Panc1 (cell line): ENCODE measurements at regions of chr11 and their contacts with region 1.

Region 1: DNA sequence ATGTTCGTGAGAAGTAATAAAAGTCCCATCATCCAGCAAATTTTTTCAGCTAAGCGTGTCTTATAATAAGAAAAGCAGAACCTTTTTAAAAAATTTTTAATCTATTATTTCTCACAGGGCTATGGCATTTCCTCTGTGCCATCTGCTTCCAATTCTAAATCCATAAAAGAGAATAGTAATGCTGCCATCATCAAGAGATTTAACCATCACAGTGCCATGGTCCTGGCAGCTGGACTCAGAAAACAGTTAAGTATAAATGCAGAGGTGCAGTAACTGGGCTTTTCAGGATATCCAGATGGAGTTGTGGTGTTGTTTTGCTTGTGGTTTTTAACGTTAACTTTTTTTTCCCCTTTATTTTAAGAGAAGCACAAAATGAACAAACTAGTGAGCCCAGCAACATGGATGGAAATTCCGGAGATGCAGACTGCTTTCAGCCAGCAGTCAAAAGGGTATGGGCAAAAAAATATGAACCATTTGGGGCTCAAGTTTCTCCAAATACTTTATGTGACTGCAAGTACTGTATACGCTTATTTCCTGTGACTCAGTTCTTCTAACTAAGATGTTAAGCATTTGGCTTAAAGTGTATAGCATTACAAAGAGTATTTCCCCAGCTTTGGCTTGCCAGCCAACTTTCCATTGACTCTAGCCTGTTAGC is 25.2 kb downstream of the GTF2H1 start:
- DNase-seq: no peak
- ATAC-seq: no peak
- H3K4me3 ChIP-seq: no peak overlapping the region
- H3K27ac ChIP-seq: no peak overlapping the region
- H3K4me1 ChIP-seq: no peaks in the 10 kb centered on the region
- H3K27me3 ChIP-seq: no peaks in the 10 kb centered on the region
- CTCF ChIP-seq: no peak

Region 2: DNA sequence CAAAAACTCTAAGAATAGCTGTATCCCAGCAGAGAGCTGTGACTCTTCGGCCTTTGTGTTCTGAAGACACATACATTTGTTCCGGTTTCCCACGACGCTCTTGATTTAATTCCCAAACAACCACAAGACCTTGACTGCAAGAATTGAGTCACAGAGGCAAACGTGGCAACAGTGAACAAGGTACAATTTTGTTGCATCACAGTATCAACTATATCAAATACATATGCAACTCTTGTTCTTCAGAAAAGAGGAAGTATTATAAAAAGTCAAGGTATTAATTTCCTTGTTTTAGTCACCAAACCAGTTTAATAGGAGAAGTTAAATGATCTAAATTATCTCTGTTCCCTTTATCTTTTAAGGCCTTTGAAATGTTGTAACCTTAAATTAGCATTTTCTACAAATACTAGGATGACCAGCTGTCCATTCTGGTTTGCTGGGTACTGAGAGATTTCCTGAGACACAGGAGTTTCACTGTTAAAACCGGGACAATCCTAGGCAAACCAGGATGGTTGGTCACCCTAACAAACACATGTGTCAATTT is 36.7 kb before region 1 on chr11:
- CTCF ChIA-PET with region 1: no interaction called
- POLR2A ChIA-PET with region 1: interaction called, 12 read pairs
- in situ Hi-C with region 1: no loop called
- intact Hi-C with region 1: no loop called
- DNase-seq: no peak
- ATAC-seq: no peak
- H3K4me3 ChIP-seq: no peak overlapping the region
- H3K27ac ChIP-seq: no peak overlapping the region
- H3K4me1 ChIP-seq: no peaks in the 10 kb centered on the region; the same call in 1 of the 2 replicates
- H3K27me3 ChIP-seq: no peaks in the 10 kb centered on the region
- CTCF ChIP-seq: no peak

Region 3: DNA sequence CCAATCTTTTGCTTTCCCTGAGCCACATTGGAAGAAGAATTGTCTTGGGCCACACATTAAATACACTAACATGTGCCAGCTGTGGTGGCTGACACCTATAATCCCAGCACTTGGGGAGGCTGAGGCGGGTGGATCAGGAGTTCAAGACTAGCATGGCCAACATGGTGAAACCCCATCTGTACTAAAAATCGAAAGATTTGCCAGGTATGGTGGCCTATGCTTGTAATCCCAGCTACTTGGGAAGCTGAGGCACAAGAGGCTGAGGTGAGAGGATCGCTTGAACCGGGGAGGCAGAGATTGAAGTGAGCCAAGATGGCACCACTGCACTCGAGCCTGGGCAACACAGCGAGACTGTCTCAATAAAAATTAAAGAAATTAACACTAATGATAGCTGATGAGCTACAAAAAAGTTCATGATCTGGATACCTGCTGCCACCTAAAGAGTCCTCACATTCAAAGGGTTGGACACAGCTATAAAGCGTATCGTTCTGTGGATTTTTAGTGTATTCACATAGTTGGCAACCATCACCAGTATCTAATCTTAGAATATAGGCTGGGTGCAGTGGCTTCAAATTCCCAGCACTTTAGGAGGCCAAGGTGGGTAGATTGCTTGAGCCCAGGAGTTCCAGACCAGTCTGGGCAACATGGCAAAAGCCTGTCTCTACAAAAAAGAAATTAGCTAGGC is 61.1 kb after region 1 on chr11:
- CTCF ChIA-PET with region 1: interaction called, 10 read pairs
- POLR2A ChIA-PET with region 1: no interaction called
- in situ Hi-C with region 1: no loop called
- intact Hi-C with region 1: no loop called
- DNase-seq: no peak
- ATAC-seq: peak; percentile 43
- H3K4me3 ChIP-seq: no peak overlapping the region
- H3K27ac ChIP-seq: no peak overlapping the region
- H3K4me1 ChIP-seq: peaks cover 5% of the 10 kb centered on the region
- H3K27me3 ChIP-seq: no peaks in the 10 kb centered on the region
- CTCF ChIP-seq: no peak